Endothelial cell of umbilical vein (primary cell): ENCODE measurements at regions of chr13 and their contacts with region 1.

Region 1: DNA sequence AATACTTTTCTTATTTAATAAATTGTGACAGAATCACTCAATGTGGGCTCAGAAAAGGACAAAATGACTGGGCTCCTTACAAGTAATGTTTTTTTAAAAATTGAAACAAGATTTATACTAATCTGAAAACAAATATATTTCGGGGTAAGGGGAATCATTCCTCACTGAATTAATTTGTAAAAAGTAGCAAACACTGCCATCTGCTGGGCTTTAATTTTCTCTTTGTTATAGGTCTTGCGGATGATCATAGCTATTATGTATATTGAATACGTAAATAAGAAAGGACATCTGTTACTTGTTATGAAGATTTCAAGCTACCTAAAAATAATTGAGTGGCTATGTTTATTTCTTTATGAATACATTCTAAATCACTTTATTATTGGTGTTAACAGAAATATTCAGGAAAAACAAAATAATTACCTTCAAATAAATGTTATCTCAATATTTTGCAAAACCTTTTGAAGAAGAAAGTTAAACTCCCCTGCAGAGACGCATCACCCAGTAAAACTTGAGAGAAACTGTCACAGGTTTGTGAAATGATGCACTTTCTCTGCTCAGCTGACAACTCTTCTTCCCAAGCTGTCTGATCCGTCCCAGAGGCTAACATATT is 17.8 kb upstream of the ENOX1 start:
- DNase-seq: peak; percentile 83
- H3K4me3 ChIP-seq: peak overlapping the region in 1 of 3 experiments; percentile 60
- H3K27ac ChIP-seq: peak overlapping the region; percentile 5
- H3K4me1 ChIP-seq: peaks cover 7% of the 10 kb centered on the region
- H3K27me3 ChIP-seq: no peaks in the 10 kb centered on the region
- CTCF ChIP-seq: peak; percentile 6 to 19
- POLR2A ChIP-seq: no peak

Region 2: DNA sequence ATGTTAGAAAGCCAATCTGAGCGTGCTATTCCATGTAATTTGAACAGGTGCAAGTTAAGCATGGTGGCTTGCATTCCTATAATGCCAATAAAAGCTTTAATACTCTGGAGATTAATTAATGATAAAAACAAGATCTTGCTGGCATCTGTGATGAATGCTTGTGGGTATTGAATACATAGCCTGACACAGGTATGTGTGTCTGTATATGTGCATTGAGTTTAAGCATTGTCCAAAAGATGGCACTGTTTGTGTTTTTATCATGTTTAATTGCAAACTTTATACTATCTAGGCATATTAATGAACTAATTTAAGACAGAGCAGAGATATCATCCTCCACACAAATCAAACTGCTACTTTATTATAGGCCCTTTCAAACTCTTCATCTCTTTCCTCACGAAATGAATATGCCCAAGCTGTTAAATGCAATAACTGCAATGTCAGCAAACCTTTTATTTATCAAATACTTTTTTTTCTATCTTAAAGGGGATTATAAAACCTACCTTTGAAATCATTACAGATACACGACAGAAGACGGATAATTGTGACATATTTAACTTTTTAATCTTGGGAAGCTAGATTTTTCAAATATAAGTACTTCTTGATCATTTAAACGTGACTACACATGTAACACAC is 1144.1 kb before region 1 on chr13:
- CTCF ChIA-PET with region 1: interaction called, 6 read pairs
- POLR2A ChIA-PET with region 1: no interaction called
- dilution Hi-C with region 1: no loop called
- intact Hi-C with region 1: loop called (anchors 5 kb)
- DNase-seq: no peak
- H3K4me3 ChIP-seq: no peak overlapping the region
- H3K27ac ChIP-seq: no peak overlapping the region
- H3K4me1 ChIP-seq: no peaks in the 10 kb centered on the region
- H3K27me3 ChIP-seq: peaks cover 6 to 11% of the 10 kb centered on the region in 2 experiments
- CTCF ChIP-seq: no peak
- POLR2A ChIP-seq: no peak

Region 3: GRCh38 chr13:43132257-43132656 is 672.3 kb before region 1 on chr13:
- CTCF ChIA-PET with region 1: interaction called, 12 read pairs
- POLR2A ChIA-PET with region 1: no interaction called
- dilution Hi-C with region 1: no loop called
- intact Hi-C with region 1: no loop called
- DNase-seq: peak; percentile 16
- H3K4me3 ChIP-seq: no peak overlapping the region
- H3K27ac ChIP-seq: no peak overlapping the region
- H3K4me1 ChIP-seq: no peaks in the 10 kb centered on the region
- H3K27me3 ChIP-seq: peaks cover 0 to 3% of the 10 kb centered on the region in 2 experiments
- CTCF ChIP-seq: no peak
- POLR2A ChIP-seq: no peak

Region 4: DNA sequence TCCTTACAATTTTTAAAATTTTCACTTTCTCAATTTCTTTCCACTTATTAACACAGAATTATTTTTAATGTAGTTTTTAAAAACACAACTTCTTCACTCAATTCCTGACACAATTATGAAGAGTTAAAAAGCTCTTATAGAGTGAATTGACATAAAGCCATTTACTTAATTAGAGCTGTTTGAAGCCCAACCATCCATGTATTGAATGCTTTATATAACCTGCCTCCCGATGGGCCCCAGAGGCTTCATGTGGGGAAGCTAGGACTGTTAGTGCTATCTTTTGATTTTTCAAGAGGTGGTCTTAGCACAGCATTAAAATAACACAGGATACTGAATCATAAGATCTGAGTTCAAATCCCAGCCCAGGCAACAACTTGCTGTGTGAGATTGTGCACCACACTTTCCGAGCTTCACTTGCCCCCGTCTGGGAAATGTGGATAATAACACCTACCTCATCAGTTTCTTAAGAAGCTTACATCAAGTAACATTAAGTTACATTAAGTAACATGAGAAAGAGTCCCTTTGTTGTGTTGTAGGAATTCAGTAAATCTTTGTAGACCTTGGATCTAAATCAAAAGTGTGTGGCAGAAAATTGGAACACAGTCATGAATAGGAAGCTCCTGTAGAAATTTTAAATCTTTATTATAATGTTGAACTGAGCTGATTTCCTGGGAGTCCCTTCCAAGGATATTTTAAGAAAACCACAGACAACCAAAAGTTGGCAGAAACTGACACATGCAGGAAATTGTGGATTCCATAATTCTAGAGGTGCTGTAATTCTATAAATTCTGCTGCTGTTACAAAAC is 12.3 kb before region 1 on chr13:
- CTCF ChIA-PET with region 1: interaction called, 23 read pairs
- POLR2A ChIA-PET with region 1: interaction called, 3 read pairs
- dilution Hi-C with region 1: no loop called
- intact Hi-C with region 1: no loop called
- DNase-seq: no peak
- H3K4me3 ChIP-seq: no peak overlapping the region
- H3K27ac ChIP-seq: no peak overlapping the region
- H3K4me1 ChIP-seq: peaks cover 6% of the 10 kb centered on the region
- H3K27me3 ChIP-seq: peaks cover 0 to 2% of the 10 kb centered on the region in 2 experiments
- CTCF ChIP-seq: no peak
- POLR2A ChIP-seq: no peak

Region 5: DNA sequence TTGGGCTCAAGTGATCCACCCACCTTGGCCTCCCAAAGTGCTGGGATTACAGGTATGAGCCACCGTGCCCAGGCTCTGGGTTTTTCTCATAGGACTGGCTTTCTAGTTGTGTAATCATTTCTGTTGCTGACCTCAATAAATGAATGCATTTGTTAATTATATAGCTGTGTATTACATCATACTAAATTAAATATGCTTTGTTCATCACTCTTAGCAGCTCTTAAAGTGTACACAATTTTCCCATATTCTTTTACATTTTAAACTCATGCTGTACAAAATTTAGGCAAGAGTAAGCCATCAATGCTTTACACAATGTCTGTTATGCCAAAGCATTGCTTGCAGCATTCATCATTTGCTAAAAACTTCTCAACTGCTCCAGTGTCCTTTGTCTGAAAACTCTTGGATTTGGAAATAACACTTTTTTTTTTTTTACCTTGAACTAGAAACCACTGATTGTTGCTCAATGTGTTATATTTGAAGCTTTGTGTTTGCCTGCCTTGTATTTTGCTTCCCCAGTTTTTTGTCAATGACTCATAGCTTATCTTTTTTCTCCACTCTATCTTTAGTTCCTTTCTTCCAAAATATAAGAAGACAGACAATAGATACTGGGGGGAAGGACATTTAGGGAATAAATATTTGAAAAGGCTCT is 43.6 kb after region 1 on chr13:
- CTCF ChIA-PET with region 1: interaction called, 10 read pairs
- POLR2A ChIA-PET with region 1: no interaction called
- dilution Hi-C with region 1: no loop called
- intact Hi-C with region 1: loop called (anchors 5 kb)
- DNase-seq: peak; percentile 87
- H3K4me3 ChIP-seq: no peak overlapping the region
- H3K27ac ChIP-seq: peak overlapping the region; percentile 70
- H3K4me1 ChIP-seq: peaks cover 25% of the 10 kb centered on the region
- H3K27me3 ChIP-seq: no peaks in the 10 kb centered on the region
- CTCF ChIP-seq: no peak
- POLR2A ChIP-seq: no peak